Heart left ventricle (tissue), 16 donors: ENCODE measurements at regions of chr11 and their contacts with region 1.

Region 1: DNA sequence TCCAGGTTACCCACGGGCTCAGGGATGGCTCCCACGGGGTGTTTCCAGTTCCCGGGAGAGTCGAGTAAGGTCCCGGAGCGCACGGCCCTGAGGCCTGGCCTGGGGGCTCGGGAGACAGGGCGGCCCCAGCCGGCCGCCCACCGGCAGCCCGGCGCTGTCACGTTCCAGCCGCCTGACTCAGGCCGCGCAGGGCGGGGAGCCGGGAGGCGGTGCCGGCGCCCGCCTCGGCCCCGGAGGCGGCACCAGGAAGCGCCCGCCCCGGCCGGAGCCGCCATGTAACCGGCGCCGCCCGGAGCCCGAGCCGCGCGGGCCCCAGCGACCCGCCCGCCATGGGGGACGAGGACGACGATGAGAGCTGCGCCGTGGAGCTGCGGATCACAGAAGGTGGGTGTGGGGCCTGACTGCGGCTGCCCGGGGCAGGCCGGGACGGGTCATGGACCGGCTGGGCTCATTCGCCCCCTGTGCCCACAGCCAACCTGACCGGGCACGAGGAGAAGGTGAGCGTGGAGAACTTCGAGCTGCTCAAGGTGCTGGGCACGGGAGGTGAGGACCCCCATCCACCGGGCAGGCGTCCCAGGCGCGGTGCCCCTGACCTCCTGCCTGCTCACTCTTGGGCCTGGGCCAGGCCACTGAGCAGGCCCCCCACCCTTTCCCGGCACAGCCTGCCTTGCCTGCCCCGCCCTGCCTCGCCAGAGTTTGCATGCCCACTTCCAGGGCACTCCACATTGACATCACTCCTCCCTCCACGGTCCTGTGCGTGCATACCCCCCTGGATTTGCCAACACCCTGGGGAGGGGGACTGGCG is at the start of gene RPS6KA4:
- DNase-seq: peak; percentile 73 to 85 (median 74)
- ATAC-seq: peak; percentile 33 to 84 (median 78)
- H3K4me3 ChIP-seq: peak within 1 kb of the TSS; percentile 68 to 94 (median 84)
- H3K27ac ChIP-seq: peak within 1 kb of the TSS; percentile 78 to 95 (median 92)
- H3K4me1 ChIP-seq: peaks cover 3 to 47% (median 30%) of the 10 kb centered on the region in 12 donors
- H3K27me3 ChIP-seq: no peaks in the 10 kb centered on the region
- CTCF ChIP-seq: peak in 1 of 12 donors; percentile 19
- POLR2A ChIP-seq: peak in 1 of 2 donors; percentile 72
- total RNA-seq, gene RPS6KA4: 12.8 to 32.5 (median 18.3) TPM

Region 2: DNA sequence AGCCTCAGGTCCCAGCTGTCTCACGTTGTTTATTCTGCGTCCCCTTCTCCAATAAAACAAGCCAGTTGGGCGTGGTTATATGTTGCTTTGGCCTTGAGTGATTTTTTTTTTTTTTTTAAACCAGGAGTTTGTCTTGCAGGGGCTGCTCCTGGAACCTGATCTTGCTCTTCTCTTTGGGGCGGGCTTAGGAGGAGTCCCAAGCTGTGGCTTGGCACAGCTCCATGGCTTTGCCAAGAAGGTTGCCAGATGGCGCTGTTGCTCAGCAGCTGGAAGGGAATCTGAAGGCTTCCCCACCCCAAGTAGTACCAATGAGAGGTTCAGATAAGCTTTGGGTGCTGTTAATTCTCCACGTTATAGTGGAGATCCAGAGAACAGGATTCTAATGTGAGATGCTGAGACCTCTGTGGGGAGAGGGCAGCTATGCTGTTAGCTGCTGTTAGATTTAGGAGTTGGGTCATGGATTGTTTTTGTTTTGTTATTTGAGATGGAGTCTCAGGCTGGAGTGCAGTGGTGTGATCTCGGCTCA is 154.6 kb before region 1 on chr11:
- intact Hi-C with region 1: loop called in 1 of 10 experiments (anchors 5 kb)
- DNase-seq: peak; percentile 83 to 91 (median 85)
- ATAC-seq: peak; percentile 48 to 65 (median 57)
- H3K4me3 ChIP-seq: no peak overlapping the region
- H3K27ac ChIP-seq: peak overlapping the region in 2 of 12 donors; percentile 44 to 98
- H3K4me1 ChIP-seq: peaks cover 0 to 47% (median 27%) of the 10 kb centered on the region in 12 donors
- H3K27me3 ChIP-seq: no peaks in the 10 kb centered on the region
- CTCF ChIP-seq: peak; percentile 55 to 84 (median 68)
- POLR2A ChIP-seq: no peak

Region 3: DNA sequence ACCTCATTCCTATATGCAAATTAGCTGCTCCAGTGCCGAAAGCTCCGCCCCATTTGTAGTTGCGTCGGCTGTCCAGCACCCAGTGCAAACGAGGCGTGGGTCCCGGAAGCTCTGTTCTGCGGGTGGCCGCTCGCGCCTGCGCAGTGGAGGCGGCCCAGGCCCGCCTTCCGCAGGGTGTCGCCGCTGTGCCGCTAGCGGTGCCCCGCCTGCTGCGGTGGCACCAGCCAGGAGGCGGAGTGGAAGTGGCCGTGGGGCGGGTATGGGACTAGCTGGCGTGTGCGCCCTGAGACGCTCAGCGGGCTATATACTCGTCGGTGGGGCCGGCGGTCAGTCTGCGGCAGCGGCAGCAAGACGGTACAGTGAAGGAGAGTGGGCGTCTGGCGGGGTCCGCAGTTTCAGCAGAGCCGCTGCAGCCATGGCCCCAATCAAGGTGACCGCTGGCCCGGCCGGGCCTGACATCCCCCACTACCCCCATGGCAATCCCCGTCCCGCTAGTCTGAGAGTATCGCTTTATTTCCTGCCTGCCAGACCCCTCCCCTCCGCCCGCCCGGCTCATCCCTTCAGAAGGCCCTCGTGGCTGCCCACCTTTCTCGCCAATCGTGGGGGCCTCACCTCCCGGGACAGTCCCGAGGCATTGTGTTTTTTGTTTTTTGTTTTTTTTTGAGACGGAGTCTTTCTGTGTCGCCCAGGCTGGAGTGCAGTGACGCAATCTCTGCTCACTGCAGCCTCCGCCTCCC is 41.0 kb before region 1 on chr11 and contains the start of gene PRDX5:
- intact Hi-C with region 1: loop called in 7 of 10 experiments (anchors 1 to 5 kb)
- DNase-seq: peak; percentile 97 to 99 (median 98)
- ATAC-seq: peak; percentile 88 to 93 (median 90)
- H3K4me3 ChIP-seq: peak within 1 kb of the TSS; percentile 69 to 99 (median 88)
- H3K27ac ChIP-seq: peak within 1 kb of the TSS; percentile 92 to 100 (median 99)
- H3K4me1 ChIP-seq: peaks cover 0 to 43% (median 25%) of the 10 kb centered on the region in 12 donors
- H3K27me3 ChIP-seq: no peaks in the 10 kb centered on the region
- CTCF ChIP-seq: peak in 11 of 12 donors; percentile 14 to 71 (median 46)
- POLR2A ChIP-seq: peak; percentile 65 to 89
- total RNA-seq, gene PRDX5: 220 to 561 (median 290) TPM